ENCODE measurements at regions of chr5 and their contacts with region 1.

Region 1: DNA sequence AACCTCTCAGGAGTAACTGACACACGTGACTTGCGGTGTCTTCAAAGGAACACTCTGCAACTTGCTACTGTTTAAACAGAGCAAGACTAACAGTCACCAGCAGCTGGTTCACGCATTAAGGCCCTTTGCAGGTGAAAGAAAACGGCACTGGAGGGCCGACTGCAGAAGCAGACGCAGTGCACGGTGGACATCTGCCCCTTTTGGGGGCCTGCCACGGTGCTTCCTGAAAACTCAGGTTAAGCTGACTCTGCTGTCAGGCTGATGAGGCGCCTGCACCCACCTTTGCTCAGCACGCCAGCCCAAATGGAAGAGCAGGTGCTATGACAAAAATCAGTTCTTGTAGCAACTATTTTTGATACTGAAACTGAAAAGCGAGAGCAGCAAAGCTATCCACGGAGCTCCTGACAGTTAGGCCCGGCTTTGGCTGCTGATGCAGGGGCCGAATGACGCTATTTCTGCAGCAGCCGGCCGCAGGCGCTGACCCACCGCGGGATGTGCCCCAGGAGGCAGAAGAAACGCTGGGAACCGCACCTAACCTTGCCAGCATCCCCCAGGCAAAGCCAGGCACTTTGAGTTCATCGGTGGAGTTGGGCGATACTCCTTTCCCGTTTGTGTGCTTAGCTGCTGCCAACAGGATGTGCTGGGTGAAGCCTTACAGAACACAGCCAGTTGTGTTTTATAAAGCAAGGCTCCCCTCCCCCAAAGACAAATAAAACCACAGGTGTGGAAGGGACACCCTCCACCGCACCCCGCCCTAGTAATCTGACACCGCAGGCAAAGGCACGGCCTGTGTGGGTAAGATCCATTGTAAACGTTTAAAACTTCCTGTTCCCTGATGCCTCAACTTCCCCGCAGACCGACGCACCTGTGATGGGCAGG is 21.1 kb upstream of the TERT start:
- DNase-seq: peak in 8 of 9 donors; percentile 47 to 88 (median 82)
- ATAC-seq: peak; percentile 79
- H3K4me3 ChIP-seq: peak overlapping the region; percentile 51
- H3K4me3 Mint-ChIP-seq: peak overlapping the region; percentile 81 to 92 (median 86)
- H3K27ac ChIP-seq: peak overlapping the region; percentile 66
- H3K27ac Mint-ChIP-seq: peak overlapping the region; percentile 94 to 96 (median 95)
- H3K4me1 ChIP-seq: peaks cover 39 to 55% of the 10 kb centered on the region in 2 donors
- H3K4me1 Mint-ChIP-seq: peaks cover 36 to 70% (median 59%) of the 10 kb centered on the region in 7 donors
- H3K27me3 ChIP-seq: no peaks in the 10 kb centered on the region
- H3K27me3 Mint-ChIP-seq: peaks cover 0 to 2% (median 0%) of the 10 kb centered on the region in 5 donors

Region 2: DNA sequence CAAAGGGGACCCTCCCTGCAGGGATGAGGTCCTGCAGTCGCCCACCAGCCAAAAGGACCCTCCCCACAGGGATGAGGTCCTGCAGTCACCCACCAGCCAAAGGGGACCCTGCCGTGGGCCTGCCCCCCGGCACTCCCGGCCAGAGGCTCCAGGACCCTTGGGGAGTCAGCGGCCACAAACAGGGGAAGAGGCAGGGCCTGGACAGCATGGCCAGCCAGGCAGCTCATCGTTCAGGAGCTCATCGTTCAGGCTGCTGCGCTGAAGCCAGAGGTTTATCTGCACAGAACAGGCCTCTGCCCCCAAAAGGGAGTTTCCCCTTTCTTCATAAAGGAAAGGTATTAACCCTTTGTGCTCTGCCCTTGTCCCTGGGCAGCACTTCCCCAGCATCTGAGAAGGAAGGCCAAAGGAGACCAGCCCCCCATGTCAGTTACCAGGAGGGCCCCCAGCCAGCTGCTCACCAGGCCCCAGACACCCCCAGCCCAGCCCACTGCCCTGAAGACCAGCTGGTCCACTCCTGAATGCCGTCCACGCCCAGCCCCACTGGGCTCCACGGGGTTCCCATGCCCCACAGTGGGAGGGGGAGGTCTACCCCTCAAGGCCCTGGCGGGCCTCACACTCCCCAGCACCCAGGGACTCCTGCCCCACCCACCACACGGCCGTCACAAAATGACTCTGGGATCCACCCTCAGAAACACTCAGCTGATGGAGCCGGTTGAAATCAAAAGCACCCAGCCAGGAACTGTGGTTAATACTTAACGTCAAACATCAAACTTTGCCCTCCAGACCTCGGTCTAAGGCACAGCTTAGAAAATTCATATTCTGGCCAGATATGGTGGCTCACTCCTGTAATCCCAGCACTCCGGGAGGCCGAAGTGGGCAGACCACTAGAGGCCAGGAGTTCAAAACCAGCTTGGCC is 210.3 kb before region 1 on chr5:
- CTCF ChIA-PET with region 1: interaction called, 9 read pairs
- POLR2A ChIA-PET with region 1: interaction called, 5 read pairs
- intact Hi-C with region 1: loop called (anchors 10 kb)
- DNase-seq: peak; percentile 50 to 86 (median 83)
- ATAC-seq: peak; percentile 82
- H3K4me3 ChIP-seq: peak overlapping the region; percentile 77
- H3K4me3 Mint-ChIP-seq: peak overlapping the region; percentile 77 to 94 (median 88)
- H3K27ac ChIP-seq: peak overlapping the region; percentile 89
- H3K27ac Mint-ChIP-seq: peak overlapping the region; percentile 85 to 100 (median 97)
- H3K4me1 ChIP-seq: peaks cover 37 to 79% of the 10 kb centered on the region in 2 donors
- H3K4me1 Mint-ChIP-seq: peaks cover 48 to 90% (median 69%) of the 10 kb centered on the region in 7 donors
- H3K27me3 ChIP-seq: no peaks in the 10 kb centered on the region
- H3K27me3 Mint-ChIP-seq: no peaks in the 10 kb centered on the region

Region 3: GRCh38 chr5:1125030-1125357 is 191.0 kb before region 1 on chr5:
- CTCF ChIA-PET with region 1: no interaction called
- POLR2A ChIA-PET with region 1: no interaction called
- intact Hi-C with region 1: no loop called
- DNase-seq: no peak
- ATAC-seq: no peak
- H3K4me3 ChIP-seq: no peak overlapping the region
- H3K4me3 Mint-ChIP-seq: no peak overlapping the region
- H3K27ac ChIP-seq: no peak overlapping the region
- H3K27ac Mint-ChIP-seq: no peak overlapping the region
- H3K4me1 ChIP-seq: no peaks in the 10 kb centered on the region
- H3K4me1 Mint-ChIP-seq: peaks cover 0 to 5% (median 0%) of the 10 kb centered on the region in 7 donors
- H3K27me3 ChIP-seq: no peaks in the 10 kb centered on the region
- H3K27me3 Mint-ChIP-seq: peaks cover 0 to 18% (median 3%) of the 10 kb centered on the region in 5 donors

Region 4: GRCh38 chr5:1255081-1255561 is 60.8 kb before region 1 on chr5:
- CTCF ChIA-PET with region 1: interaction called, 3 read pairs
- POLR2A ChIA-PET with region 1: interaction called, 4 read pairs
- intact Hi-C with region 1: loop called (anchors 1 to 5 kb)
- DNase-seq: peak; percentile 31 to 79 (median 71)
- ATAC-seq: peak; percentile 83
- H3K4me3 ChIP-seq: peak overlapping the region; percentile 48
- H3K4me3 Mint-ChIP-seq: peak overlapping the region; percentile 76 to 97 (median 90)
- H3K27ac ChIP-seq: peak overlapping the region; percentile 57
- H3K27ac Mint-ChIP-seq: peak overlapping the region; percentile 30 to 93 (median 89)
- H3K4me1 ChIP-seq: peaks cover 9 to 18% of the 10 kb centered on the region in 2 donors
- H3K4me1 Mint-ChIP-seq: peaks cover 7 to 23% (median 20%) of the 10 kb centered on the region in 7 donors
- H3K27me3 ChIP-seq: no peaks in the 10 kb centered on the region
- H3K27me3 Mint-ChIP-seq: no peaks in the 10 kb centered on the region

Region 5: GRCh38 chr5:1294835-1295649 is 20.9 kb before region 1 on chr5 and contains the start of gene TERT:
- CTCF ChIA-PET with region 1: interaction called, 6 read pairs
- POLR2A ChIA-PET with region 1: interaction called, 31 read pairs
- intact Hi-C with region 1: loop called (anchors 1 to 2 kb)
- DNase-seq: peak; percentile 50 to 81 (median 74)
- ATAC-seq: peak; percentile 91
- H3K4me3 ChIP-seq: no peak within 1 kb of the TSS
- H3K4me3 Mint-ChIP-seq: peak within 1 kb of the TSS in 9 of 10 donors; percentile 45 to 66 (median 59)
- H3K27ac ChIP-seq: no peak within 1 kb of the TSS
- H3K27ac Mint-ChIP-seq: no peak within 1 kb of the TSS
- H3K4me1 ChIP-seq: peaks cover 0 to 11% of the 10 kb centered on the region in 2 donors
- H3K4me1 Mint-ChIP-seq: peaks cover 0 to 15% (median 4%) of the 10 kb centered on the region in 7 donors
- H3K27me3 ChIP-seq: no peaks in the 10 kb centered on the region
- H3K27me3 Mint-ChIP-seq: peaks cover 0 to 6% (median 0%) of the 10 kb centered on the region in 5 donors
- total RNA-seq, gene TERT: 0.13 to 3.3 (median 1.8) TPM

Region 6: GRCh38 chr5:1332461-1333001 is 16.6 kb after region 1 on chr5:
- CTCF ChIA-PET with region 1: no interaction called
- POLR2A ChIA-PET with region 1: interaction called, 5 read pairs
- intact Hi-C with region 1: loop called in 1 of 2 experiments (anchors 2 kb)
- DNase-seq: no peak
- ATAC-seq: no peak
- H3K4me3 ChIP-seq: no peak overlapping the region
- H3K4me3 Mint-ChIP-seq: no peak overlapping the region
- H3K27ac ChIP-seq: no peak overlapping the region
- H3K27ac Mint-ChIP-seq: peak overlapping the region in 2 of 9 donors; percentile 64 to 69
- H3K4me1 ChIP-seq: peaks cover 0 to 6% of the 10 kb centered on the region in 2 donors
- H3K4me1 Mint-ChIP-seq: peaks cover 16 to 26% (median 20%) of the 10 kb centered on the region in 7 donors
- H3K27me3 ChIP-seq: no peaks in the 10 kb centered on the region
- H3K27me3 Mint-ChIP-seq: no peaks in the 10 kb centered on the region

Measured in naive thymus-derived CD4-positive, alpha-beta T cell (primary cell).